ENCODE measurements at regions of chr11 and their contacts with region 1.

Region 1: DNA sequence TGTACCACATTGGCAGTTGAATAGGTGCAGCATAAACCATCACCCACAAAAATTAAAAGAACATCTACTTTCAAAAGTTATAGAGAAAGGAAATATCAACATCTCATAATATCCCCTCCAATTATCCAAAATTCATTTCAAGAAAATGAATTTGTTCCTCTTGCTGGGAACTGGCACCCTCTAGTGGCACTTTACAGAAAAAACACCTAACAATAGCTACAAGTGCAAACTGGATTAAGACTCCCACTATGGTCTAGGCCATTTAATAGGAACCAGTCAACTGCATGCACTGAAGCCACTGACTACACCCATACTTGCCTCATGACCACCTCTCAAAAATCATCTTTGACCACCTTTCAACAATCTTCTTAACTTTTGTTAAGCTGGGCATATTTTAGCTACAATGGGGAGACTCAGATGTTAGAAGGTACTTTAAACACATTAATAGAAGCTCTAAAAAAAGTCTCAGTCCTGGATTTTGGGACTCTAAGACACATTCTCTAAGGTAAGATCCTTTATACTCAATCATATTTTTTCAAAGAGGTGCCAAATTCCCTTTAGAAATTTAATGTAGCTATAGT is 17.3 kb downstream of the TRAF6 start:
- DNase-seq: peak; percentile 48 to 68
- ATAC-seq: peak; percentile 67 to 77; a peak in 5 of 6 replicates
- H3K4me3 ChIP-seq: no peak overlapping the region
- H3K27ac ChIP-seq: no peak overlapping the region
- H3K4me1 ChIP-seq: no peaks in the 10 kb centered on the region
- CTCF ChIP-seq: peak; percentile 89
- EP300 ChIP-seq: no peak
- POLR2A ChIP-seq: no peak
- RAD21 ChIP-seq: peak; percentile 73 to 81

Region 2: DNA sequence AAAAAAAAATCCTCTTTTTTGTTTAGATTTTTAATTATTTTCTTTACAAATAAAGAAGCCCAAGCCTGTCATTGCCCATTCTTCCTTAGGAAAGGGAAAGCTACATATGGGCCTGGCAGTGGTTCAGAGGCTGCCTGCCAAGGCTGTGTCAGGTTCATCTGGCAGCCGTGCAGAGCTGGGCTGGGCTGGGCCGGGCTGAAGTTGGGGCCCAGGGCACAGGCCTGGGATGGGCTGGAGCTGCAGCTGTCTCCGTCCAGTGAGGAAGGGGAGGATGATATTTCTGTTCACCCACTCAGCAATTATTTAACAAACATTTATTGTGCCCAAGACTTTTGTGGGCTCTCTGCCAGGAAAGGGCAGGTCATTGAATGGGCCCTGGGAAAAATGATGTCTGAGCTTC is 192.2 kb before region 1 on chr11:
- CTCF ChIA-PET with region 1: interaction called, 11 read pairs
- POLR2A ChIA-PET with region 1: no interaction called
- DNase-seq: no peak
- ATAC-seq: no peak
- H3K4me3 ChIP-seq: no peak overlapping the region
- H3K27ac ChIP-seq: no peak overlapping the region
- H3K4me1 ChIP-seq: peaks cover 11% of the 10 kb centered on the region; the same call in 1 of the 3 replicates
- CTCF ChIP-seq: no peak
- EP300 ChIP-seq: no peak
- POLR2A ChIP-seq: no peak
- RAD21 ChIP-seq: no peak

Region 3: DNA sequence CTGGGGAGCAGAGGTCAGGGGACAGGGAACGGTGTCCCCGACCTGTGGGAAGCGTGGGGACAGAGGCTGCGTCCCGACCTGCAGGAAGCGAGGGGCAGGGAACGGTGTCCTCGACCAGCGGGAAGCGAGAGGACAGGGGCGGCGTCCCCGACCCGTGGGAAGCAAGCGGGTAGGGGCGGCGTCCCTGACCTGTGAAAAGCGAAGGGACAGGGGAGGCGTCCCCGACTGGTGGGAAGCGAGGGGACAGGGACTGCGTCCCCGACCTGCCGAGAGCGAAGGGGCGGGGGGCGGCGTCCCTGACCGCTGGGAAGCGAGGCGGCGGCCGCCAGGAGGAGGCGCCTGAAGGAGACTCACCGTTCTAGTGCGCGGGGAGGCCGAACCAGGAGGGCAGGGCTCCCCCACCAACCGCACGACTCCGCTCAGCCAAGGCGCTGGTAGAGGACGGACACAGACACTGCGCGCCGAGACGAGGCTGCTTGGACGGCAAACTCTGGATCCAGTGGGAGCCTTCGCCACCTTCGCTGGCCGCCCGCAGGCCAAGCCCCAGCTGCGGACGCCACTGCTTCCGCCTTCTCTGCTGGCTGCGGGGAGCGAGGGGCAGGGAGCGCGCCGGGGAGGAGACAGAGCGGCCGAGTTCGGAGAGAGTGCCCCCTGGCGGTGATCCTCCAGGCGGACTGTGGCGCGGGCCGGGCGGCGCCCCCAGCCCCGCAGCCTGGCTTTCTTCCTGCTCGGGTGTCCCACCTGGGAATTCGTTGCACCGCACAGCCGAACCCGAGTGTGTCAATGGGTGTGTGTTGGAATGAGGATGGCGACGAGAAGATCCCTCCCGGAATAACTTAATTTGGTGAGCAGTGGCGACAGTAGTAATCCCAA is 17.1 kb after region 1 on chr11 and contains the start of gene TRAF6:
- CTCF ChIA-PET with region 1: interaction called, 16 read pairs
- POLR2A ChIA-PET with region 1: interaction called, 3 read pairs
- DNase-seq: peak; percentile 62 to 90
- ATAC-seq: peak; percentile 96 to 99
- H3K4me3 ChIP-seq: peak within 1 kb of the TSS; percentile 70
- H3K27ac ChIP-seq: peak within 1 kb of the TSS; percentile 89 to 93
- H3K4me1 ChIP-seq: peaks cover 11% of the 10 kb centered on the region
- CTCF ChIP-seq: peak; percentile 83
- EP300 ChIP-seq: no peak
- POLR2A ChIP-seq: peak; percentile 97
- RAD21 ChIP-seq: no peak
- polyA plus RNA-seq, gene TRAF6: 9.6 and 11.6 TPM in 2 replicates